ENCODE measurements at regions of chr12 and their contacts with region 1.

Region 1: DNA sequence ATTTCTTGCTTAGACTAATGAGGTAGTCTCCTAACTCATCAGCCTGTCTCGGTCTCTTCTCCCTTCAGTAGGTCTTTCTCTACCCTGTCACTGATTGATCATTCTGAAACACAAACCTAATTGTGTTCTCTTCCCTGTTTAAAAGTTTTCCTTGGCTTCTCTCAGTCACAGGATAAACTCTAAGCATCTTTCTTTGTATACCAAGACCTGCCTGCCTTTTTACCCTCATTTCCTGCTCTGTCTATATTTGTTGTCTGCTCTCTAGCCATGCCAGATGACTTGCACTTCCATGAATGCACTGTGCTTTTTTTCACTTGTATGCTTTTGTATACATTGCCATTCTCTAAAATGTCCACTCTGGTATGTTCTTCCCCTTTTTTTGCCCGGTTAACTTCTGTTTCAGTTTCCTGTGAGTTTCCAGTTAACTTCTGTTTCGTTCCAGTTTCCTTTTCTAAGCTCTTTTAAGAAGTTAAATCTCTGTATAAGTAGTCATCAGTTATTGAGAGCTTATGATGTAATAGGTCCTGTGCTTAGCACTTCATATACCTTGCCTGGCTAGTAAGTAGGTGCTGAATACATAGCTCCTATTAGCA is 12.8 kb downstream of the DIP2B start:
- DNase-seq: peak; percentile 23
- H3K4me3 Mint-ChIP-seq: no peak overlapping the region
- H3K27ac Mint-ChIP-seq: no peak overlapping the region
- H3K4me1 Mint-ChIP-seq: peaks cover 69% of the 10 kb centered on the region
- H3K27me3 Mint-ChIP-seq: no peaks in the 10 kb centered on the region

Region 2: GRCh38 chr12:50275556-50275955 is 242.0 kb before region 1 on chr12:
- CTCF ChIA-PET with region 1: no interaction called
- intact Hi-C with region 1: no loop called
- DNase-seq: no peak
- H3K4me3 Mint-ChIP-seq: no peak overlapping the region
- H3K27ac Mint-ChIP-seq: no peak overlapping the region
- H3K4me1 Mint-ChIP-seq: peaks cover 4% of the 10 kb centered on the region
- H3K27me3 Mint-ChIP-seq: no peaks in the 10 kb centered on the region

Region 3: DNA sequence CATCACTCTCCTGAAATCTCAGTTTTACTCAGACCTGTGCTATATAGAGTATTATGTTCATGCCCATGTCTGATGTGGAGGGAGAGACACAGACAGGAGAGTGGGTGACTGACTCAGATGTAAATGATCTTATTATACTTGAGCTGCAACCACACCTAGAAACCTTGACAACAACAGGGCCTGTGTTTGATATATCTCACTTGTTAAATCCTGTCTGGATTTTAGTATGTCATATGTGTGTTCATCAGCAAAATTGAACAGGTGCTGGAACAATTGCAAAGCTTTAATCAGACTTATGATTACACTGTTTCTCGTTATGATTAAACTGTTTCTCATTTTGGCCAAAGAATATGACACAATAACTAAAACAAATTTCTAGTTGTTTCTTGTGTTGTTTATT is 24.9 kb after region 1 on chr12:
- CTCF ChIA-PET with region 1: interaction called, 5 read pairs
- intact Hi-C with region 1: loop called (anchors 1 kb)
- DNase-seq: peak; percentile 64
- H3K4me3 Mint-ChIP-seq: no peak overlapping the region
- H3K27ac Mint-ChIP-seq: peak overlapping the region; percentile 85
- H3K4me1 Mint-ChIP-seq: peaks cover 55% of the 10 kb centered on the region
- H3K27me3 Mint-ChIP-seq: no peaks in the 10 kb centered on the region

Region 4: DNA sequence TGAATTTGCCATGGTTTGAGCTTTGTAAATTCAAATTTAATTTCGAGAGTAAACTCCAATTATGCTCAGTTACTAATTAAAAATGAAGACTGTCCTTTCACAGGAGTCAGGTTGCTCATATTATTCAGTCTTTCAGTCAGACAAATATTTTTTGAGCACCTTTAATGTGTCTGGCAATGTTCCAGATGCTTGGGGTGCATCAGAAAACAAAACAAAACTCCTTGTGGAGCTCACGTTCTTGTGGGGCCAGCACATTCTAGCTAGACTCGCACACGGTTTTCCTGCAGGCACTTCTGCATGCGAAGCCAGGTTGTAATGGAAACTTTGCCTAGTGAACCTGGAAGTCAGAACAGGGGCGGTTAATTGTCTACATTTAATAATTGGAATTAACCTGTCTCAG is 182.4 kb after region 1 on chr12:
- CTCF ChIA-PET with region 1: no interaction called
- intact Hi-C with region 1: no loop called
- DNase-seq: no peak
- H3K4me3 Mint-ChIP-seq: no peak overlapping the region
- H3K27ac Mint-ChIP-seq: no peak overlapping the region
- H3K4me1 Mint-ChIP-seq: no peaks in the 10 kb centered on the region
- H3K27me3 Mint-ChIP-seq: no peaks in the 10 kb centered on the region

Region 5: DNA sequence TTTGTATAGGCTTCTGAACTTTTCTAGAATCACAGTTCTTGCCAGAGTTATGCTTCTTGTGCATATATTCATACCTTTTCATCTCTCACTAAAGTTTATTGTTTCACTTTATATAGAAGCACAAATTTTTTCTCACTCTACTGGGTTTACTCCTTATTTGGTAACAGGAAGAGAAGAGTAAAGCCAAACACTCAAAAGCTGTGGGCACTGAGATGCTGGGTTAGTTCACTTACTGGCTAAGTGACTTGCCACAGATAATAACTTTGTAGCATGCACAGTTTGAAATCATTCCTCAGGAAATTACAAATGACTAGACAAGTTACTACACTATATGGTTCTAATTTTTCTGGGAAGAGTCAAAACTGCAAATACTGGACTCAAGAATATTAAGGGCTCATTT is 442.6 kb after region 1 on chr12:
- CTCF ChIA-PET with region 1: no interaction called
- intact Hi-C with region 1: no loop called
- DNase-seq: no peak
- H3K4me3 Mint-ChIP-seq: no peak overlapping the region
- H3K27ac Mint-ChIP-seq: no peak overlapping the region
- H3K4me1 Mint-ChIP-seq: peaks cover 8% of the 10 kb centered on the region
- H3K27me3 Mint-ChIP-seq: no peaks in the 10 kb centered on the region